ENCODE measurements at regions of chr7 and their contacts with region 1.

Region 1: DNA sequence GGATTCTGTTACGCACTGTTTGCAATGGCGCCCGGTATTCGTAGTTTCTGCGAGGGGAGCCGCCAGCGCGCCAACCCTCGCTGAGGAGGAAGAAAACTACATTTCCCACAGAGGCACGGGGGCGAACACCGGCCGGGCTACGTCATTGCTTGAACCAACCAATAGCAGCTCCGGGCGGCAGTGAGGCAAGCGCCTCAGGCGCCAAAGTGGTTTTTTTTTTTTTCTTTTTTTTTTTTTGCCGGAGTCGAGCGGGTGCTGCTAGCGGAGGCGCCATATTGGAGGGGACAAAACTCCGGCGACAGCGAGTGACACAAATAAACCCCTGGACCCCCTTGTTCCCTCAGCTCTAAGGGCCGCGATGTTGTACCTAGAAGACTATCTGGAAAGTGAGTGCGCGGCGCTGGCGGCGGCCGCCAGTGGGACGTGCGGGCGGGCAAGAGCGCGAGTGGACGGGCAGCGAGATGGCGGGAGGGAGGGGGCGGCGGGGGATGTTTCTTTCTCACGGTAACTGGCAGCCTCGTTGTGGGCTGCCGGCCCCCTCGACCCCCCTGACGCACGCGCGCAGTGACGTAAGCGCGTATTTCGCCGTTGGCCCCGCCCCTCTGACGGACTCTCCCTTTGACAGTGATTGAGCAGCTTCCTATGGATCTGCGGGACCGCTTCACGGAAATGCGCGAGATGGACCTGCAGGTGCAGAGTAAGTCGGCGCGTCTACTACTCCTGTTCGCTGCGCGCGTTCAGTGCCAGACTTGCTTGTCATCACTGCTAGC is at the start of gene ING3:
- DNase-seq: peak; percentile 97 to 99 (median 98)
- ATAC-seq: peak; percentile 93
- H3K4me3 ChIP-seq: peak within 1 kb of the TSS; percentile 80
- H3K4me3 Mint-ChIP-seq: peak within 1 kb of the TSS; percentile 81 to 99 (median 96)
- H3K27ac ChIP-seq: peak within 1 kb of the TSS; percentile 94
- H3K27ac Mint-ChIP-seq: peak within 1 kb of the TSS; percentile 96 to 99 (median 98)
- H3K4me1 ChIP-seq: peaks cover 5 to 9% of the 10 kb centered on the region in 2 donors
- H3K4me1 Mint-ChIP-seq: peaks cover 14 to 34% (median 25%) of the 10 kb centered on the region in 7 donors
- H3K27me3 ChIP-seq: no peaks in the 10 kb centered on the region
- H3K27me3 Mint-ChIP-seq: peaks cover 12 to 20% (median 15%) of the 10 kb centered on the region in 5 donors
- total RNA-seq, gene ING3: 26.4 to 36.1 (median 27.7) TPM

Region 2: DNA sequence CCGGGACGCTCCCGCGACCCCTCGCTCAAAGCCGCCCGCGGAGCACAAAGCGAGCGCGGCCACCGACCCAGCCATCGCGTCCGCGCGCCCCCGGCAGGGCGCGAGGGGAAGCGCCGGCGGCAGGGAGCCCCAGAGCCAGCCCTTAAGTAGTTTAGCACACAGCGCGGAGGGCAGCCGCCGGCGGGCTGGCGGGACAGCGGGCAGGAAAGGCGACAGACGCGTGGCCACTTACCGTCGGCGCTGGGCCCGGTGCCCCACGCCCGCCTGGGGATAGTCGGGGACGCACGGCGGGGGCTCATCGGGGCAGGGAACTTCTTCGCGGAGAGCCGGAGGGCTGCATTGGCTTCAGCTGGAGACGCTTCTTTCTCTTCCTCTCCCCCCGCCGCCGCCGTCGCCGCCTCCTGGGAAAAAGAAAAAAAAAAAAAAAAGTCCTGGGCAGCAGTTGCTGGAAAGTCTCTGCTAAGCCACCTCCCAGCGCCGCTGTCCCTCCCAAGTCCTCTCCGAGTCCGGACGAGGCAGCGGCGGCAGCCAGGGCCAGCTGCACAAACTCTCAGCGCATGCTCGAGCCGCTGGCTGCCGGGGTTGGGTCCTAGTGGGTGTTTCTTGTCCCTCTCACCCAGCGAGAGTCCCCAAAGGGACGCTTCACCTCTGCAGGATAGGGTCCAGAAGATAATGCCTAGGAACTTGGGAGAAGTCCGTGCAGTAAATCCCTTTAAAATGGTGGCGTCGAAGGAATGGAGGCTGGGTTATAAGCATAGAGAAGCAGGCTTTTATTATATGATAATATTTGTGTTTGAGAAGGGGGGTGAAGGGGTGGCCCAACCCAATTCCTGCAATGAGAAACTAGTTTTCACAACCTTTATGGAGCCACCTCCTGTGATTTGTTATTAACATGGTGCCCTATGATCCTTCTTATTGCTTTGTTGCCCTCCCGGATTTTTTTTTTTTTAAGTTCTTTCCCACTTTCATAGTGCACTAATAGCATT is 92.8 kb before region 1 on chr7 and contains the start of gene TSPAN12:
- CTCF ChIA-PET with region 1: no interaction called
- POLR2A ChIA-PET with region 1: no interaction called
- intact Hi-C with region 1: loop called (anchors 1 to 10 kb)
- DNase-seq: peak in 7 of 9 donors; percentile 11 to 64 (median 28)
- ATAC-seq: peak; percentile 89
- H3K4me3 ChIP-seq: peak within 1 kb of the TSS; percentile 52
- H3K4me3 Mint-ChIP-seq: peak within 1 kb of the TSS; percentile 82 to 90 (median 86)
- H3K27ac ChIP-seq: no peak within 1 kb of the TSS
- H3K27ac Mint-ChIP-seq: no peak within 1 kb of the TSS
- H3K4me1 ChIP-seq: peaks cover 0 to 8% of the 10 kb centered on the region in 2 donors
- H3K4me1 Mint-ChIP-seq: peaks cover 10 to 13% (median 12%) of the 10 kb centered on the region in 7 donors
- H3K27me3 ChIP-seq: peaks cover 13 to 15% of the 10 kb centered on the region in 2 donors
- H3K27me3 Mint-ChIP-seq: peaks cover 51 to 71% (median 66%) of the 10 kb centered on the region in 5 donors
- total RNA-seq, gene TSPAN12: not detected

Region 3: DNA sequence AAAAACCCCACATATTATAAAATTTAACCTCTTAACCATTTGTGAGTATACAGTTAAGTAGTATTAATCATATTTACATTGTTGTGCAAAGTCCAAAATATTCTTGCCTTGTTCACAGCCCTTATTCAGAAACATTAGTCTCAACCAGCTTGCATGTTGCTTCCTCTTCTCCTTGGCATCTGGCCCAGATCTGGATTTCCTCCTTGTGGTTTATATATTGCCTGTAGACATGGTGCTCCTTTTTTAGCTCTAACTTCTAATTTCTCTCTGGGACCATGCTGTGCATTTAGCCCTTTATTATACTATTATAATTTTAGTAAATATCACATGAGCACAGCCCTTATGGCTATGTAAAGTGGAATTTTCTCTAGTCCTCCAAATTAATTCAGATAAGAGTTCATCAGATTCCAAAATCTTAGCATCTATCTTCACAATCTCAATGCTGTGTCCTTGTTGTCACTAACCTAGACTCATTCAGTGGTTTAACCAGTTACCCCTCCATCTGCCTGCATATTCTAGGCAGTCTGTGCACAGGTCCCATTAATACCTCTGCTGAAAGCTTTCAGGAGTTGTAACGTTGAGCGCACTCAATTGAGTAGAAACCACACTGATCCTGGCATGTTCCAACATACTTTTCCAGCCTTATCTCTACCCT is 45.7 kb after region 1 on chr7:
- CTCF ChIA-PET with region 1: no interaction called
- POLR2A ChIA-PET with region 1: interaction called, 3 read pairs
- intact Hi-C with region 1: loop called in 1 of 2 experiments (anchors 2 kb)
- DNase-seq: peak in 7 of 9 donors; percentile 60 to 80 (median 75)
- ATAC-seq: peak; percentile 91
- H3K4me3 ChIP-seq: no peak overlapping the region
- H3K4me3 Mint-ChIP-seq: peak overlapping the region in 9 of 10 donors; percentile 10 to 69 (median 32)
- H3K27ac ChIP-seq: no peak overlapping the region
- H3K27ac Mint-ChIP-seq: peak overlapping the region in 3 of 9 donors; percentile 4 to 38 (median 34)
- H3K4me1 ChIP-seq: peaks cover 0 to 13% of the 10 kb centered on the region in 2 donors
- H3K4me1 Mint-ChIP-seq: peaks cover 7 to 56% (median 42%) of the 10 kb centered on the region in 7 donors
- H3K27me3 ChIP-seq: no peaks in the 10 kb centered on the region
- H3K27me3 Mint-ChIP-seq: peaks cover 0 to 42% (median 15%) of the 10 kb centered on the region in 5 donors

Region 4: DNA sequence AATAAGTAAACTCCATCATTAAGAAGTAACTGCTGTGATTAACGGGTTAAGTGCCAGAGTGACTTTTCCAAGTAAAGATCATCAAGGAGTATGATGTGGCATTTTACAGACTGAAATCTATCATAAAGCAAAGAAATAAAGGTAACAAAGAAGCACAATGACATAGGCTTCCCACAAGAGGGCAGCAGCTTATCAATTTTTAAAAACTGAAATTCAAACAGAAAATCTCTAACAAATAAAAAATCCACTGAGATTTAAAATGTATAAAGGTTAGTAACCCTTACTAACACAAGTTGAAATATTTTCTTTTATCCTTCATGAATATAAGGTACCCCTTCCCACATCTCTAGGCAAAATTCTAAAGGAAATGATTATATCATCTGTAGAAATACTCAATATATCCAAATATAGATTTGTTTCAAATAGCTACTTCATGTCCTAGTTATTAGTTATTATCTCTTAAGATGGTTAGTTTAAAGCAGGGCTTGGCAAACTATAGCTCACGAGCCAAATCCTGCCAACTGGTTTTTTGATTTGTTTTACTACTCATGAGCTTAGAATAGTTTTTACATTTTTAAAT is 416.2 kb after region 1 on chr7:
- CTCF ChIA-PET with region 1: no interaction called
- POLR2A ChIA-PET with region 1: no interaction called
- intact Hi-C with region 1: loop called in 1 of 2 experiments (anchors 10 kb)
- DNase-seq: peak in 6 of 9 donors; percentile 26 to 61 (median 57)
- ATAC-seq: peak; percentile 67
- H3K4me3 ChIP-seq: no peak overlapping the region
- H3K4me3 Mint-ChIP-seq: no peak overlapping the region
- H3K27ac ChIP-seq: no peak overlapping the region
- H3K27ac Mint-ChIP-seq: peak overlapping the region in 3 of 9 donors; percentile 45 to 69 (median 47)
- H3K4me1 ChIP-seq: no peaks in the 10 kb centered on the region
- H3K4me1 Mint-ChIP-seq: peaks cover 0 to 39% (median 4%) of the 10 kb centered on the region in 7 donors
- H3K27me3 ChIP-seq: no peaks in the 10 kb centered on the region
- H3K27me3 Mint-ChIP-seq: no peaks in the 10 kb centered on the region

Region 5: DNA sequence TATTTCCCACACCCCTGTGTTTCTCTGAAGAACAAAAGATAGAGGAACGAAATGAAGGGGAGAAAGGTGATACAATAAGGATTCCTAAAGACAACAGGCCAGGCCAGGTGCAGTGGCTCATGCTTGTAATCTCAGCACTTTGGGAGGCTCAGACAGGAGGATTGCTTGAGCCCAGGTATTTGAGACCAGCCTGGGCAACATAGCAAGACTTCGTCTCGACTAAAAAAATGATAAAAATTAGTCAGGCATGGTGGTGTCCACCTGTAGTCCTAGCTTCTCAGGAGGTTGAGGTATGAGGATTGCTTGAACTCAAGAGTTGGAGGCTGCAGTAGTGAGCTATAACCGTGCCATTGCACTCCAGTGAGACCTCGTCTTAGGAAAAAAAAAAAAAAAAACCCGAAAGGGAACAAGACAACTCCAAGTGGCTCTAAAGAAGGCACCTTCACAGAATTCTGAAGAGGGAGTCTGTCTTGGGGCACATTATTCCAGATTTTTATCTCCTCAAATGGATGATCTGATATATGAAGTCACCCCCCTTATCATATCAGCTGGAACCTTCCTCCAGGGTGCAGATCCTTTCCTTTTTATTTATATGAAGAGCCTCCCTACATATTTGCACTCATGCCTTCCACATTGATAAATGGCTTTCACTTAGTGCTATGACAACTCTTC is 486.9 kb after region 1 on chr7:
- CTCF ChIA-PET with region 1: no interaction called
- POLR2A ChIA-PET with region 1: no interaction called
- intact Hi-C with region 1: loop called in 1 of 2 experiments (anchors 1 kb)
- DNase-seq: no peak
- ATAC-seq: no peak
- H3K4me3 ChIP-seq: peak overlapping the region; percentile 50
- H3K4me3 Mint-ChIP-seq: peak overlapping the region in 9 of 10 donors; percentile 74 to 88 (median 80)
- H3K27ac ChIP-seq: peak overlapping the region; percentile 46
- H3K27ac Mint-ChIP-seq: peak overlapping the region; percentile 91 to 98 (median 96)
- H3K4me1 ChIP-seq: peaks cover 20 to 25% of the 10 kb centered on the region in 2 donors
- H3K4me1 Mint-ChIP-seq: peaks cover 12 to 53% (median 42%) of the 10 kb centered on the region in 7 donors
- H3K27me3 ChIP-seq: no peaks in the 10 kb centered on the region
- H3K27me3 Mint-ChIP-seq: no peaks in the 10 kb centered on the region

Measured in naive thymus-derived CD4-positive, alpha-beta T cell (primary cell).